ENCODE measurements at regions of chr15 and their contacts with region 1.

Region 1: DNA sequence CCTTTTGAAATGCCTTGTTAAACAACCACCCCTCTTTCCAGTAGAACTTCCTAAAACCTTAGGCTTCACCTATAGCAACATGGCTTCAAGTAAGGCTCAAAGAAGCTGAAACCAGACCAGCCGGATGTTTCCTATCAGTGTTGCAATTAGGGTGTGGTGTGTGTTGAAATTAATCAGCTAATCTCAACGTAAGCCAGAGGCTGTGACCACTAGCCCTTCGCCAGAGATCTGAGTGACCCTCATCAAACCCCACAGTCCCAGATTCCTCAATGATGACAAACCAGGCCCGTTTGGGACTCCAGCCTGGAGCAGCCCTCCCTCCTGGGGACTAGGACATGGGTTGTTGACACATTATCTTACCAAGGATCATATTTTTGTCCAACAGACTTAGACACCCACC is 27.3 kb downstream of the CYP11A1 start:
- DNase-seq: no peak
- H3K4me3 ChIP-seq: no peak overlapping the region
- H3K4me1 ChIP-seq: no peaks in the 10 kb centered on the region
- H3K27me3 ChIP-seq: no peaks in the 10 kb centered on the region; the same call in 1 of the 2 replicates

Region 2: GRCh38 chr15:73273181-73274002 is 1066.7 kb before region 1 on chr15:
- in situ Hi-C with region 1: loop called (anchors 25 kb)
- DNase-seq: peak; percentile 84 to 87
- H3K4me3 ChIP-seq: no peak overlapping the region
- H3K4me1 ChIP-seq: 0 out of 2 replicates have a peak, but pooled peaks cover 2% of the 10 kb centered on the region
- H3K27me3 ChIP-seq: no peaks in the 10 kb centered on the region

Measured in HAP-1 (cell line).